ENCODE measurements at regions of chr2 and their contacts with region 1.

Region 1: GRCh38 chr2:236180831-236181453 is 12.8 kb upstream of the GBX2 start:
- DNase-seq: peak in 1 of 2 experiments; percentile 84
- H3K4me3 ChIP-seq: no peak overlapping the region
- H3K27ac ChIP-seq: no peak overlapping the region
- H3K4me1 ChIP-seq: peaks cover 0 to 3% (median 0%) of the 10 kb centered on the region in 4 experiments; a peak in 4 of 7 replicates
- H3K27me3 ChIP-seq: peaks cover 13 to 39% (median 31%) of the 10 kb centered on the region in 4 experiments
- CTCF ChIP-seq: peak; percentile 34 to 72 (median 65)
- EP300 ChIP-seq: no peak
- POLR2A ChIP-seq: no peak
- RAD21 ChIP-seq: peak; percentile 88 to 91

Region 2: DNA sequence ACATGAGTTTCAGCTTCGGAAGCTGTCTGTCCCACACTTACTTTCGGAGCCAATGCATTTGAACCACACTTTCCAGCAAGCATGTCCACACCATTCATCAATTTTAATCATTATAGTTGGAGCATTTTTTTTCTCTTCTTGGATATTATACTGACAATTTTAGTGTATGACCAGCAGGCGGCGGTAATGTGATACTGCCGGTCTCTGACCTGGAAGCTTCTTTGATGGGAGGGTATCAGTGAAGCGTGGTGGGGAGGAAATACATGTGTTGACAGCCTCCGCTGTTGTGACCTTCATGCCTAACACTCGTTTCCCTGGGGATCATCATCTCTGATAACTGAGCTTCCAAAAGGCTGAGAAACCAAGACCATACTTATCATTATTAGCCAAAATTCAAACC is 244.4 kb before region 1 on chr2:
- CTCF ChIA-PET with region 1: interaction called, 87 read pairs
- POLR2A ChIA-PET with region 1: no interaction called
- DNase-seq: no peak
- H3K4me3 ChIP-seq: no peak overlapping the region
- H3K27ac ChIP-seq: no peak overlapping the region
- H3K4me1 ChIP-seq: 0 out of 7 replicates have a peak, but pooled peaks cover 0 to 2% (median 0%) of the 10 kb centered on the region in 4 experiments
- H3K27me3 ChIP-seq: no peaks in the 10 kb centered on the region; a peak in 1 of 7 replicates
- CTCF ChIP-seq: peak; percentile 28 to 70 (median 60)
- EP300 ChIP-seq: no peak
- POLR2A ChIP-seq: no peak
- RAD21 ChIP-seq: peak; percentile 77 to 78

Region 3: DNA sequence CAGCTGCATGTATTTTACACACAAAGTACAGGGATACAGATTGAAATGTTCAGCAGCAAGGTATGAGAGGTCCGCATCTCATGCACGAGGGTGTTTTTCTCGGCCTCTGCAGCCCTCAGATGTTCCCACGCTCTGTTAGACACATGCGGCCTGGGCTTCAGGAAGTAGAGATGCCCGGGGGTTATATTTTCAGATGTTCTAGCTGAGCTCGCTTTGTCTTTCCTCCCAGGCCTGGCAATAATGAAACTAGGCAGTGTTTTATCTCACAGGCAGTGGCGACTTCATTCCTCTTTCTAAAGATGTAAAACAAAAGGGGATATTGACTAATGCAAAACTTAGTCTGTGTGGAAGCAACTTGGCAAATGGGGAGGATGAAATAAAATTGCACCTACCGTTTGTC is 203.5 kb before region 1 on chr2:
- CTCF ChIA-PET with region 1: interaction called, 10 read pairs
- POLR2A ChIA-PET with region 1: no interaction called
- DNase-seq: no peak
- H3K4me3 ChIP-seq: no peak overlapping the region
- H3K27ac ChIP-seq: no peak overlapping the region
- H3K4me1 ChIP-seq: no peaks in the 10 kb centered on the region
- H3K27me3 ChIP-seq: no peaks in the 10 kb centered on the region
- CTCF ChIP-seq: no peak
- EP300 ChIP-seq: no peak
- POLR2A ChIP-seq: no peak
- RAD21 ChIP-seq: no peak

Region 4: DNA sequence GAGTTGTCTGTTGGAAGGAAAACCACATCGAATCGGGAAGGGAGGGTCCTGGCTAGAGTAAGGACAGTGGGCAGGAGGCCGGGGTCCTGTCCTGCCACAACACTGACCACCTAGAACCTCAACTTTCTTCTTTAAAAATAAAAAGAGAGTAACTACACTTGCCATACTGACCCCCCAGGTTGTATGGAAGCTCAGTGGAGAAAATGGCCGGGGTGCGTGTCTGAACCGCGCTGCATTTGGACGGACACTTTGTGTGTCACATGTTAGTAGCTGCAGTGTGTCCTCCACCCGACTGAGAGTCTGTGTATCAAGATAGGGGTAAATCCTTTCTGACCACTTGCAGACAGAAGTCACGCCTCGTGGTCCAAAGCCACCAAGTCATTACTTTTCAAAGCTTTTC is 99.8 kb before region 1 on chr2:
- CTCF ChIA-PET with region 1: interaction called, 34 read pairs
- POLR2A ChIA-PET with region 1: no interaction called
- DNase-seq: no peak
- H3K4me3 ChIP-seq: no peak overlapping the region
- H3K27ac ChIP-seq: no peak overlapping the region
- H3K4me1 ChIP-seq: peaks cover 6 to 20% (median 13%) of the 10 kb centered on the region in 4 experiments
- H3K27me3 ChIP-seq: no peaks in the 10 kb centered on the region
- CTCF ChIP-seq: no peak
- EP300 ChIP-seq: no peak
- POLR2A ChIP-seq: no peak
- RAD21 ChIP-seq: no peak

Region 5: GRCh38 chr2:236107536-236107935 is 73.4 kb before region 1 on chr2:
- CTCF ChIA-PET with region 1: interaction called, 12 read pairs
- POLR2A ChIA-PET with region 1: no interaction called
- DNase-seq: no peak
- H3K4me3 ChIP-seq: no peak overlapping the region
- H3K27ac ChIP-seq: no peak overlapping the region
- H3K4me1 ChIP-seq: peaks cover 0 to 22% (median 11%) of the 10 kb centered on the region in 4 experiments; a peak in 6 of 7 replicates
- H3K27me3 ChIP-seq: no peaks in the 10 kb centered on the region
- CTCF ChIP-seq: no peak
- EP300 ChIP-seq: no peak
- POLR2A ChIP-seq: no peak
- RAD21 ChIP-seq: no peak; a peak in 1 of 4 replicates

Region 6: GRCh38 chr2:236162882-236163470 is 18.0 kb before region 1 on chr2:
- CTCF ChIA-PET with region 1: interaction called, 50 read pairs
- POLR2A ChIA-PET with region 1: interaction called, 7 read pairs
- DNase-seq: no peak
- H3K4me3 ChIP-seq: peak overlapping the region in 3 of 4 experiments; percentile 0 to 60 (median 5); a peak in 3 of 8 replicates
- H3K27ac ChIP-seq: no peak overlapping the region
- H3K4me1 ChIP-seq: peaks cover 4 to 59% (median 46%) of the 10 kb centered on the region in 4 experiments
- H3K27me3 ChIP-seq: peaks cover 89 to 98% (median 95%) of the 10 kb centered on the region in 4 experiments
- CTCF ChIP-seq: no peak
- EP300 ChIP-seq: no peak
- POLR2A ChIP-seq: no peak
- RAD21 ChIP-seq: no peak

Region 7: DNA sequence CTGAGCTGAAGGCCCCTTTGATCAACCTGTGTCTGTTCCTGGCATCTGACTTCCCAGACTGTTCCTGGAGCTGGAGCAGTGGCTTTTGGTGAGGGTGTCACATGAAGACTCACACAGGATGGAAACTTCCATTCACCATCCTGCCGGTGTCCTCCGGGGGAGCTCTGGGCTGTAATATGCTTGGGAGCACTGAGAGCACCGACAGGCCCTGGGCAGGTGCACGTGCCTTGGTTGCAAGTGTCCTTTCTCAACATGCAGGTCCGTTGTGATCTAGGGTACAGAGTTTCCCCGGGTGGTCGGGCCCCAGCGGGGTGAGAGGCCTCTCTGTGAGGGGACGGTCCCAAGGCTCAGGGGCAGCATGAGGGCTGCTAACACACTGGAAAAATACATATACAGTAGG is 12.1 kb after region 1 on chr2:
- CTCF ChIA-PET with region 1: interaction called, 14 read pairs
- POLR2A ChIA-PET with region 1: no interaction called
- DNase-seq: peak in 1 of 2 experiments; percentile 52
- H3K4me3 ChIP-seq: no peak overlapping the region
- H3K27ac ChIP-seq: no peak overlapping the region
- H3K4me1 ChIP-seq: no peaks in the 10 kb centered on the region; a peak in 1 of 7 replicates
- H3K27me3 ChIP-seq: no peaks in the 10 kb centered on the region
- CTCF ChIP-seq: peak; percentile 33 to 51 (median 39)
- EP300 ChIP-seq: no peak
- POLR2A ChIP-seq: no peak
- RAD21 ChIP-seq: peak; percentile 48 to 58; a peak in 3 of 4 replicates

Region 8: GRCh38 chr2:236284208-236284607 is 103.3 kb after region 1 on chr2:
- CTCF ChIA-PET with region 1: no interaction called
- POLR2A ChIA-PET with region 1: no interaction called
- DNase-seq: no peak
- H3K4me3 ChIP-seq: no peak overlapping the region
- H3K27ac ChIP-seq: no peak overlapping the region
- H3K4me1 ChIP-seq: no peaks in the 10 kb centered on the region
- H3K27me3 ChIP-seq: no peaks in the 10 kb centered on the region
- CTCF ChIP-seq: no peak
- EP300 ChIP-seq: no peak
- POLR2A ChIP-seq: no peak
- RAD21 ChIP-seq: no peak

Region 9: GRCh38 chr2:236440110-236440881 is 259.4 kb after region 1 on chr2:
- CTCF ChIA-PET with region 1: no interaction called
- POLR2A ChIA-PET with region 1: no interaction called
- DNase-seq: no peak
- H3K4me3 ChIP-seq: no peak overlapping the region
- H3K27ac ChIP-seq: no peak overlapping the region
- H3K4me1 ChIP-seq: 0 out of 7 replicates have a peak, but pooled peaks cover 0 to 3% (median 0%) of the 10 kb centered on the region in 4 experiments
- H3K27me3 ChIP-seq: no peaks in the 10 kb centered on the region
- CTCF ChIP-seq: no peak
- EP300 ChIP-seq: no peak
- POLR2A ChIP-seq: no peak
- RAD21 ChIP-seq: no peak

Measured in H1 (cell line).